ENCODE measurements at regions of chr9 and their contacts with region 1.

Region 1: DNA sequence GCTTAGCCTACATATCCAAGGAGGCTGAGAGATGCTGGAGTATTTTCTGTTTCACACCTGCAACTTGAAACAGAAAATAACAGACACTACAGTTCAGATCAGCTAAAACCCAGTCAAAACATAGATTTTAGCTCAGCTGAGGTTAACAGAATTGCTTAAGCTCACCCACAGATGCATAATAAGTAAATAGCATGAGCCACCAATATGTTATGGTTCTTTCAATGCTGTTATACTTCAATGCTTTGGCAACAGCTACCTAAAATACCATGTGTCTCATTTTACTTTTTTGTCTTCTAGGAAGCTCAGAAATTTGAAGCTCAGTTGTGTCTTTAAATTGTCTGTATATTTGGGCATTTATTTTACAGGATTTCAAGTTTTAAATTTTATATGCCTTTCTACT is 35.8 kb upstream of the OR13F1 start:
- DNase-seq: no peak
- H3K4me3 ChIP-seq: no peak overlapping the region
- H3K27ac ChIP-seq: no peak overlapping the region
- H3K4me1 ChIP-seq: no peaks in the 10 kb centered on the region
- H3K27me3 ChIP-seq: no peaks in the 10 kb centered on the region
- CTCF ChIP-seq: no peak
- EP300 ChIP-seq: no peak
- POLR2A ChIP-seq: no peak

Region 2: DNA sequence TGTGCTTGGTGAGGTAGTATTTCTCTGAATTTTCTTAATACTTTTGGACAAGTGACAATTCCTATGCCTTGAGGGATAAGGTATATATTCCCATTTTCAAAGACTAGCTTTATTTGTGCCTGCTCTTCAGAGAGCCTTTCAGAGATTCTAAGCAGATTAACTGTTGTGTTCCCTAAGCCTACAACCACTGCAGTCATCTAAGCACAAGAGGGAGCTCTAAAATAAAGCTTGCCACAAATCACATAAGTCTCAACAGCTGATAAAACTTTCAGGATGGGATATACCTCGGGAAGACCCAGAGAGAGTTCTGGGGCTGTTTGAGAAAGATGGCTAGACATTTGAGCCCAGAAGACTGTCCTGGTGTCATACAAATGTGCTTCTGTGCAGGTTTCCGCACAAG is 1315.8 kb before region 1 on chr9:
- in situ Hi-C with region 1: no loop called
- intact Hi-C with region 1: no loop called
- DNase-seq: no peak
- H3K4me3 ChIP-seq: no peak overlapping the region
- H3K27ac ChIP-seq: no peak overlapping the region
- H3K4me1 ChIP-seq: no peaks in the 10 kb centered on the region
- H3K27me3 ChIP-seq: no peaks in the 10 kb centered on the region
- CTCF ChIP-seq: no peak
- EP300 ChIP-seq: no peak
- POLR2A ChIP-seq: no peak

Region 3: GRCh38 chr9:104494808-104495207 is 26.5 kb after region 1 on chr9:
- in situ Hi-C with region 1: no loop called
- intact Hi-C with region 1: loop called (anchors 1 kb)
- DNase-seq: no peak
- H3K4me3 ChIP-seq: no peak overlapping the region
- H3K27ac ChIP-seq: no peak overlapping the region
- H3K4me1 ChIP-seq: no peaks in the 10 kb centered on the region
- H3K27me3 ChIP-seq: no peaks in the 10 kb centered on the region
- CTCF ChIP-seq: no peak
- EP300 ChIP-seq: no peak
- POLR2A ChIP-seq: no peak

Measured in transverse colon (tissue), 4 donors.